AG04450 (cell line): ENCODE measurements at regions of chr1 and their contacts with region 1.

Region 1: DNA sequence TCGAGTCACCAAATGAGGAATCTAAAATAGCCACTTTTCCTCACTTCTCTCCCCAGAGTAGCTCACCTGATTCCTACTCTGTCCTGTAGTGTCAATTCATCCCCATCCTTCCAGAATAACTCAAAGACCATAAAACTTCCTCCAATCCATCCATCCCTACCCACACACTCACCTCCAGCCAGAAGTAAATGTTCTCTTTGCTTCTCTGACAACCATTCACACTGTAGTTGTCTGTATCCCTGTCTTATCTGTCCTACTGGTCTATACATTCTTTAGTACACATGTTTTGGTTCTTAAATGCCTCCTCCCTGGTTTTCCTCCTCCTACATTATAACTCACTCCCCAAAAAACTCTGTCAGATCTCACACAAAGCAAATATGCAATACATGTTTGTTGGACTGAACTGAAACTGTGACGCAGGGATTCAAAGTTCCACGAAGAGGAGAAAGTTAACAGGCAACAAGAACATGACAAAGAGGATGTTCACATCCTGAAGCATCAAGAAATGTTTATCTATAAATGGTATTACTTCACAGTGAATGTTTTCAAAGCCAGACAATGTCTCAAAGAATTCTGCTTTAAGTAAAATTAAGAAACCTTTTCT is 11.0 kb downstream of the TP53BP2 start:
- DNase-seq: peak; percentile 73
- H3K4me3 ChIP-seq: peak overlapping the region; percentile 12
- H3K27ac ChIP-seq: peak overlapping the region; percentile 86
- H3K27me3 ChIP-seq: no peaks in the 10 kb centered on the region
- CTCF ChIP-seq: no peak

Region 2: GRCh38 chr1:223819730-223820514 is 14.8 kb before region 1 on chr1:
- CTCF ChIA-PET with region 1: interaction called, 3 read pairs
- POLR2A ChIA-PET with region 1: interaction called, 10 read pairs
- DNase-seq: peak; percentile 61
- H3K4me3 ChIP-seq: no peak overlapping the region
- H3K27ac ChIP-seq: peak overlapping the region; percentile 40
- H3K27me3 ChIP-seq: no peaks in the 10 kb centered on the region
- CTCF ChIP-seq: no peak

Region 3: DNA sequence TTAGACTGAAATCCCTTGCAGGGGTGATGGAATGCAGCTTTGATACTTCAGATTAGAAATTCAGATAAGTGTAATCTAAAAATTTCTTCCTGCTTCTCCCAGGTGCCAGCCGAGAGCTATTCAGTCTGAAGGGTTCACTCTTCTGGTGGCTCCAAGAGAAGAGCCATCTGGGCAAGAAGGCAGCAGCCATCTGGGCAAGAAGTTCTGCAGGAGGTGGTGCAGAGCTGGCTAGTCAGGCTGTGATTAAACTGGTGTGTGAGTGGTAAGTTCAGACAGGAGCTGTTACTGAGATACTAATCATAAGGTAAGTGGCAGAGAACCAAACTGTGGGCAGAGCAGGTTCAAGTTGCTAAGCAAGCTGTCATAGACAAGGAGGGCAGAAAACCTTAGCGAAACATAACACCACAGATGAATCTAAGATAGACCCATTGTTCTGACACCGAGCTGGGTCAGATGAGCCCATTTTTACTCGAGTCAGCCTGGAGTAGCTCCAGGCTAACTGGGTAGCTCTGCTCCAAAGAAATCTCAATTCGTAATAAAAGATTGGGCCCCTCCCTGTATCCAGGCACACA is 25.4 kb after region 1 on chr1:
- CTCF ChIA-PET with region 1: no interaction called
- POLR2A ChIA-PET with region 1: no interaction called
- DNase-seq: no peak
- H3K4me3 ChIP-seq: no peak overlapping the region
- H3K27ac ChIP-seq: no peak overlapping the region
- H3K27me3 ChIP-seq: peaks cover 7% of the 10 kb centered on the region
- CTCF ChIP-seq: no peak